Activated CD4-positive, alpha-beta T cell treated with anti-CD3 and anti-CD28 coated beads for 36 hours (primary cell): ENCODE measurements at regions of chr20 and their contacts with region 1.

Region 1: GRCh38 chr20:32674362-32674789 is 635 bp upstream of the C20orf203 start:
- DNase-seq: peak; percentile 88
- ATAC-seq: peak; percentile 73
- H3K4me3 Mint-ChIP-seq: no peak overlapping the region
- H3K27ac Mint-ChIP-seq: no peak overlapping the region
- H3K4me1 Mint-ChIP-seq: peaks cover 14% of the 10 kb centered on the region
- H3K27me3 Mint-ChIP-seq: no peaks in the 10 kb centered on the region

Region 2: DNA sequence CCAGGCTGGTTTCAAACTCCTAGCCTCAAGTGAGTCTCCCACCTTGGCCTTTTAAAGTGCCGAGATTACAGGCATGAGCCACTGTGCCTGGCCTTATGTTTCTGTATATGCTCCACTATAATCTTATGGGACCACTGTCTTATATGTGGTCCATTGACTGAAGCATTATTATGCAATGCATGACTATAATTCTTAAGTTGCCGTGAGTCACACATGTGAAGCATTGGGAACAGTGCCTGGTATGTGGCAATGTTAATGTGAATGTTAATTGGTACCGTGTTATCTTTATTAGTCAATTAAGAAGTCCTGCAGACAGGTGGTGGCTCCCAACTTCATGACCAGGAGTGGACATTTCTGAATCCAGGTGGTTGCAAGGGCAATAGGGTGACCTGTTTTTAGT is 330.9 kb before region 1 on chr20:
- CTCF ChIA-PET with region 1: no interaction called
- POLR2A ChIA-PET with region 1: no interaction called
- intact Hi-C with region 1: no loop called
- DNase-seq: no peak
- ATAC-seq: no peak
- H3K4me3 Mint-ChIP-seq: no peak overlapping the region
- H3K27ac Mint-ChIP-seq: no peak overlapping the region
- H3K4me1 Mint-ChIP-seq: peaks cover 6% of the 10 kb centered on the region
- H3K27me3 Mint-ChIP-seq: no peaks in the 10 kb centered on the region

Region 3: GRCh38 chr20:32762149-32762753 is 87.9 kb after region 1 on chr20 and contains the start of gene DNMT3B:
- CTCF ChIA-PET with region 1: interaction called, 5 read pairs
- POLR2A ChIA-PET with region 1: no interaction called
- intact Hi-C with region 1: loop called in 1 of 2 experiments (anchors 5 kb)
- DNase-seq: peak; percentile 81
- ATAC-seq: peak; percentile 74
- H3K4me3 Mint-ChIP-seq: peak within 1 kb of the TSS; percentile 74
- H3K27ac Mint-ChIP-seq: peak within 1 kb of the TSS; percentile 22
- H3K4me1 Mint-ChIP-seq: peaks cover 10% of the 10 kb centered on the region
- H3K27me3 Mint-ChIP-seq: peaks cover 7% of the 10 kb centered on the region
- total RNA-seq, gene DNMT3B: 1.4 to 1.6 TPM

Region 4: GRCh38 chr20:32894026-32894483 is 219.7 kb after region 1 on chr20:
- CTCF ChIA-PET with region 1: no interaction called
- POLR2A ChIA-PET with region 1: no interaction called
- intact Hi-C with region 1: loop called (anchors 5 to 10 kb)
- DNase-seq: peak; percentile 56
- ATAC-seq: no peak
- H3K4me3 Mint-ChIP-seq: no peak overlapping the region
- H3K27ac Mint-ChIP-seq: no peak overlapping the region
- H3K4me1 Mint-ChIP-seq: no peaks in the 10 kb centered on the region
- H3K27me3 Mint-ChIP-seq: no peaks in the 10 kb centered on the region

Region 5: DNA sequence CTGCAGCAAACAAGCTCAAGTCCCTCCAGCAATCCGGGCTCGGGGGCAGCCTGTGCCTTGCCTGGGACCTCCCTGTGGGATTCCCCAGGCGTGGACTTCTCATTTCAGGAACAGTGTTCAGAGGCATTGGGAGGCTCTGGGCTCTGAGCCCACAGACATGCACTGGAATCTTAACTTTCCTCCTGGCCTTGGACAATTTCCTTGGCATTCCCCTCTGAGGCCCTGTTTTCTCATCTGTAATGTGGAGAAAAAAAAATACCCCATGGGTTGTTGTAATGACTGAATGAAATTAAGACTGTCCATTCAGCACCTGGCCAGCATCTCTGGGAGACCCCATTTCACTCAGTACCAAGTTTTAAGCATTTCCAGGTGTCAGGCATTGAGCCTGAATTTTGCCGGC is 422.6 kb after region 1 on chr20:
- CTCF ChIA-PET with region 1: no interaction called
- POLR2A ChIA-PET with region 1: no interaction called
- intact Hi-C with region 1: loop called in 1 of 2 experiments (anchors 10 kb)
- DNase-seq: no peak
- ATAC-seq: no peak
- H3K4me3 Mint-ChIP-seq: no peak overlapping the region
- H3K27ac Mint-ChIP-seq: no peak overlapping the region
- H3K4me1 Mint-ChIP-seq: peaks cover 2% of the 10 kb centered on the region
- H3K27me3 Mint-ChIP-seq: no peaks in the 10 kb centered on the region